ENCODE measurements at regions of chr6 and their contacts with region 1.

Region 1: DNA sequence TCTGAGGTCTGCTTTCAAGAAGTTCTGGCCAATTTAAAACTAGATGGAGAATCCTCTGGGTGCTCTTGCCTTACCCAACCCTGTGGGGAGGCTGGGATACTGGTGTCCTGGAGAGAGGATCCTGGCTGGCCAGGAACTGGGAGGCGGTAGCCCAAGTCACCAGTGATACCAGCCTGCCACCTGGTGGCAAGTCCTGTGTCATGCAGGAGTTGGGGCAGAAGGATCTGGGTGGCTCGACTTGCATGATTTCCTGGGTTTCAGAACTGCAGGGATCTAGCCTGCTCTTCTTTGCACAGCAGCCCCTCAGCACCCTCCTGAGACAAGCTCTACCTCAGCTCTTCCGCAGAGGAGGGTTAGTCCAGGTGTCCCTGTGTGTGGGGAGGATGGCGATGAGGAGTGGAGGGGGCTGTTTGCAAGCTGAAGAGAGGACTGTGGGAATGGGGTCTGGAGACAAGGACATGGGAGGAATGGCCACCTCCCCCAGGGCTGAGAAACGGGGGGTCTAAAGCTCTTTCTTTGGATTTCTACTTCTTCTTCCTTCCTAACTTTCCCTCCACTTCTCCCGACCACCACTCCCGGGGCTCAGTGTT is 4.2 kb downstream of the KCNK17 start:
- DNase-seq: peak; percentile 73 to 85 (median 79)
- H3K4me3 ChIP-seq: no peak overlapping the region
- H3K27ac ChIP-seq: no peak overlapping the region
- H3K4me1 ChIP-seq: peaks cover 0 to 7% of the 10 kb centered on the region in 2 donors
- H3K27me3 ChIP-seq: peaks cover 29% of the 10 kb centered on the region
- CTCF ChIP-seq: peak; percentile 83 to 93 (median 90)
- POLR2A ChIP-seq: no peak

Region 2: DNA sequence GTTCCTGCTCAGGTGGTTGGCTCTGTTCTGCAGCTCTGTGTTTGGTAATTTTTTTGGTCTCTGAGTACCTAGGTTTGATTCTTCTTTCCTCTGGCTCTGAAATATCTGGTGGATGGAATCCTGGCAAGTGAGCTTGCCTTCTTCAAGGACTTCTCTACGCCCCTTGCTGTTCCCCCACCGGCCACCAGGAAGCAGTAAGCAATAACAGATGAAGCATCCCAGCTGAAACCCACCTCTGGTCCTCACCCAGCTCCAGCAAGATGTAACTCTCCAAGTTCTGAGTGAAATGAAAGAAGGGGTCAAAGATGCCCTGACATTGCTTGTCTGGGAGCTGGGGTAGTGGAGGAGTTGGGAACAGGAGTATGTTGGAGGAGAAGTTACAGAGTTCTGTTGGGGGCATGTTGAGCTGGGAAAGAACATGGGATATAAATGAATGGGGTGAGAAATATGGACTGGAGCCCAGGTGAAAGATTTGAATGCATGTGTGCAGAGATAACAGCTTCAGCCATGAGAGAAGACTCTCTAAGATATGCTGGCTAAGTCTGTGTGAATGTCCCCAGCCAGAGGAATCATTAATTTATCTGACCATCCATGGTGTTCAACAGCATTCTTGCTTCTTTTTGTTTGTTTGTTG is 312.8 kb before region 1 on chr6:
- intact Hi-C with region 1: loop called in 1 of 2 experiments (anchors 10 kb)
- DNase-seq: peak in 1 of 7 donors; percentile 4
- H3K4me3 ChIP-seq: no peak overlapping the region
- H3K27ac ChIP-seq: no peak overlapping the region
- H3K4me1 ChIP-seq: no peaks in the 10 kb centered on the region
- H3K27me3 ChIP-seq: peaks cover 6% of the 10 kb centered on the region
- CTCF ChIP-seq: peak in 4 of 6 experiments; percentile 18 to 37 (median 32)
- POLR2A ChIP-seq: no peak

Measured in adrenal gland (tissue), 19 donors.